WTC11 (cell line): ENCODE measurements at regions of chr9 and their contacts with region 1.

Region 1: DNA sequence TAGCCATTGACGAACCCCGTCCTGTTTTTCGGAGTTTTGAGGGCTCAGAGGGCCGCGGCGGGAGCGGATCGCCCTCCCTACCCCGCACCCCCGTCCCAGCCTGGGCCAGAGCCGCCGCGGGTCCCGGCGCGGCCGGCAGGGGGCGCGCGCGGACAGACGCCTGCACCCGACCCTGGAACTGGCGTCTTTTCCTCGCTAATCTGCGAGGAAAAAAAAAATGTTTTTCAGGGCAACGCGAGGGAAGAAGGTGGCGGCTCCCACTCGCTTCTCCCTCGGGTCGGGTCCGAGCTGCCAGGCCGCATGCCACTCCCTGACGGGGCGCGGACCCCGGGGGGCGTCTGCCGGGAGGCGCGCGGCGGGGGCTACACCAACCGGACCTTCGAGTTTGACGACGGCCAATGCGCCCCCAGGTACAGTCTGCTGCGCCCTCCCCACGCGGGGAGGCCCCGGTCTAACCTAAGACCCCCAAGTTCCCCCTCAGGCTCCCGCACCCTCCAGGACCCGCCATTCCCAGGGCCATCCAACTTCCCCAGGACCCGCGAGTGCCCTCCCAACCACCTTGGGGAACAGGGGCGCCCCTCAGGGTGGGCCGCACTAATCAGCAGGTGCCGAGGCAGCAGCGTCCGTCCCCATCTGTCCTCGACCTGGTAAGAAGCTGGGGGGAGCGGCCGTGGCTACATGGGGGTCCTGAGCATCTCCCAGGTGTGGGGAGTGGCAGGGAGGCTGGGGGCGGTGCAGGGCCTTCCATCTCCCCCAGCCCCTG is at the start of gene KCNT1:
- DNase-seq: peak; percentile 83
- ATAC-seq: peak; percentile 80
- H3K4me3 Mint-ChIP-seq: no peak within 1 kb of the TSS; the same call in 1 of the 2 replicates
- H3K27ac Mint-ChIP-seq: no peak within 1 kb of the TSS
- H3K4me1 Mint-ChIP-seq: peaks cover 2% of the 10 kb centered on the region; the same call in 1 of the 2 replicates
- H3K27me3 Mint-ChIP-seq: no peaks in the 10 kb centered on the region; the same call in 1 of the 2 replicates
- CTCF ChIP-seq: peak; percentile 96
- total RNA-seq, gene KCNT1: 0.13 to 0.16 TPM (median 0.14 TPM) in 3 replicates

Region 2: GRCh38 chr9:135602789-135603481 is 99.2 kb before region 1 on chr9:
- CTCF ChIA-PET with region 1: interaction called, 11 read pairs
- POLR2A ChIA-PET with region 1: no interaction called
- DNase-seq: peak; percentile 70
- ATAC-seq: peak; percentile 21; the same call in 1 of the 2 replicates
- H3K4me3 Mint-ChIP-seq: no peak overlapping the region
- H3K27ac Mint-ChIP-seq: no peak overlapping the region
- H3K4me1 Mint-ChIP-seq: peaks cover 10% of the 10 kb centered on the region
- H3K27me3 Mint-ChIP-seq: no peaks in the 10 kb centered on the region
- CTCF ChIP-seq: peak; percentile 90

Region 3: DNA sequence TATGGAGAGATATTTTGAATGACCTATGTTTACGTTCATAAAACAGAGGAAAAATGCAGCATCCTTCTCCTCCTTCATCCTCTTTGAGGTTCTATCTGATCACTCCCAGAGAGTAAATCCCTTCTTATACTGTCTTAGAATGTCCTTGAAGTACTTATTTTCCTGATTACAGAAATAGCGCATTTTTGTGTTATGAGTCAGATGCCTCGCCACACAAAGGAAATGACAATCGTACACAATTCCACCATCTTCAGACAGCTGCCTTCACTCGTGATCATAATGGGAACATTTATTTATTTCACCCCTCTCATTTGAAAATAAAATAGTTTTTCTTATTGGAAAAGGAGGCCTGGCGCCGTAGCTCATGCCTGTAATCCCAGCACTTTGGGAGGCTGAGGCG is 60.4 kb before region 1 on chr9:
- CTCF ChIA-PET with region 1: no interaction called
- POLR2A ChIA-PET with region 1: no interaction called
- DNase-seq: no peak
- ATAC-seq: no peak
- H3K4me3 Mint-ChIP-seq: no peak overlapping the region
- H3K27ac Mint-ChIP-seq: no peak overlapping the region
- H3K4me1 Mint-ChIP-seq: peaks cover 9% of the 10 kb centered on the region
- H3K27me3 Mint-ChIP-seq: peaks cover 13% of the 10 kb centered on the region
- CTCF ChIP-seq: no peak